Left lung (tissue), 14 donors: ENCODE measurements at regions of chr19 and their contacts with region 1.

Region 1: DNA sequence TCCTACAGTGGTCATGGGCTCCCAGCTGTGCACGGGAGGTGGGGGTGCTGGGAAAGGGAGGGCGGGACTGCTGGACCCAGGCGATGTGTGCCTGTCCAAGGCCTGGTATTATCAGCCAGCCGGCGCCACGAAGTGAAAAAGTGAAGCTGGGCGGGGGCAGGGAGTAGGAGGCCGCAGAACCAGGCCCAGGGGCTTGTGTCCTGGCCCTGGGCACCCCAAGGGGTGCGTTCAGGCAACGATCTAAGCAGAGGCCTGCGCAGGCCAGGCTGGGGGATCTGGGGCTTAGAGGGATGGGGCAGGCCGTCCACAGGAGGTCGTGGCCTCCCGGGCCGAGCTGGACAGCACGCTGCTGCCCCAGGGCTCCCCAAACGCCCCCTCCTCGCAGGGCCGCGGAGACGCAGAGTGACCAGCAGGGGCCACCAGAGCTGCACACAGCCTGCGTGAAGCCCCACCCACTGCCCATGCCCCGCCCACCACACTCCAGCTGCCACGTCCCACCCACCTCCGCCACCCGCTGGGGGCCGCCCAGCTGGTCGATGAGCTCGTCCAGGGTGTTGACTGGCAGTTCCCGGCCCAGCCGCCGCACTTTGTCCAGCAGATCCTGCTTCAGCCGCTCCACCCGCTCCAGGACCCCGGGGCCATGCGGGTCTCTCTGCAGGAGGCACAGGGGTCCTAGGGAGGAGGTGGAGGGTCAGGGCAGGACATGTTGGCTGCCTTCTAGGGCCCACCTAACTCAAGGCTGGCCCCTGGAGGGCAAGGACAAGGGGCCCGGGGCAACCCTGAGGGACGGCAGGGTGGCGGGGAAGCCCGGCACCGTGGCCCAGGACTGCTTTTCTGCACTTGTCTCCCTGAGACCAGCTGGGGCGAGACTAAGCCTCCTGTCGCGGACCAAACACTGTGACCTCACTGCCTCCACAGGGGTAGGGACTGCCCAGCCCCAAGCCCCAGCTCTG is 9.5 kb downstream of the GPX4 start:
- DNase-seq: peak; percentile 86 to 97 (median 95)
- ATAC-seq: peak; percentile 92
- H3K4me3 ChIP-seq: no peak overlapping the region
- H3K27ac ChIP-seq: peak overlapping the region; percentile 66 to 83
- H3K4me1 ChIP-seq: peaks cover 7 to 36% of the 10 kb centered on the region in 2 donors
- H3K27me3 ChIP-seq: no peaks in the 10 kb centered on the region
- CTCF ChIP-seq: peak; percentile 90 to 93

Region 2: GRCh38 chr19:1026189-1027019 is 86.9 kb before region 1 on chr19 and contains the start of gene CNN2:
- intact Hi-C with region 1: no loop called
- DNase-seq: peak; percentile 81 to 95 (median 86)
- ATAC-seq: peak; percentile 74
- H3K4me3 ChIP-seq: peak within 1 kb of the TSS; percentile 97 to 98
- H3K27ac ChIP-seq: peak within 1 kb of the TSS; percentile 94
- H3K4me1 ChIP-seq: peaks cover 8 to 71% of the 10 kb centered on the region in 2 donors
- H3K27me3 ChIP-seq: no peaks in the 10 kb centered on the region
- CTCF ChIP-seq: no peak
- polyA plus RNA-seq, gene CNN2: 133 to 214 (median 160) TPM

Region 3: DNA sequence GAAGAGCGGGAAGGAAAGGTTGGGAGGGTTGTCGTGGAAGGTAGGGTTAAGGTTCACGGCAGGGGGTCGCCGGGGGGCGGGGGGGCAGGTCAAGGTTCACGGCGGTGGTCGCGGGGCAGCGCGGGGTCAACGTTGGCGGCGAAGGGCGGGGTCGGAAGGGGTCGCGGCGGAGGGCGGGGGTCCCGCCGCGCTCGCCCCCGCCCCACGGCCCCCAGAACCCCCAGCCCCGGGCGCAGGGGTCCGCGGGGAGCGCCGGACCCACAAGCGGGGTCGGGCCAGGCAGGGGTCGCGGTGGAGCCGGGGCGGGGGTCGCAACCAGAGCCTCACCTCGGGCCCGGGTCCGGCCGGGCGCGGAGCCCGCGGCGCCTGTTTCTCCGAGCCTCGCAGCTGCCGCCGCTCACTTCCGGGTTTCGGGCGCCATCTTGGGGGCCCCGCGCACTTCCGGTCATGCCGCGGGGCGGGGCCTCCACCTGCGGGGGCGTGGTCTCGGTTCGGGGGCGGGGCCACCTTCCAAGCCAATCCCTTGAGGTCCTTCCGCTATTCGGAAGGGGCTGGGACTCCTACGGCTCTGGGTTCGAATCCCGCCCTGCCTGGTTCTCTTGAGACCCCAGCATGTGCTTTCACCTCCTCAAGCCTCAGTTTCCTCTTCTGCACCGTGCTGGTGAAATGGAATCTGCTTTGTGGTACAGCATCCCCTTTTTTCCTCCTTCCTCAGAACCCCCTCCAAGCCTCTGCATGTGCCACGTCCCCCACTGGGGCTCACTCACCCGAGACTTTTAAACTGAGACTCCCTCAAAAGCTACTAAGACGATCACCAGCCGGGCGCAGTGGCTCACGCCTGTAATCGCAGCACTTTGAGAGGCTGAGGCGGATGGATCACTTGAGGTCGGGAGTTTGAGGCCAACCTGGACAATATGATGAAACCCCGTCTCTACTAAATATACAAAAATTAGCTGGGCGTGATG is 60.8 kb after region 1 on chr19 and contains the start of gene SBNO2:
- intact Hi-C with region 1: no loop called
- DNase-seq: peak in 3 of 4 donors; percentile 87 to 95 (median 91)
- ATAC-seq: peak; percentile 76
- H3K4me3 ChIP-seq: peak within 1 kb of the TSS; percentile 73 to 85
- H3K27ac ChIP-seq: peak within 1 kb of the TSS; percentile 93 to 95
- H3K4me1 ChIP-seq: peaks cover 23 to 87% of the 10 kb centered on the region in 2 donors
- H3K27me3 ChIP-seq: no peaks in the 10 kb centered on the region
- CTCF ChIP-seq: peak in 1 of 2 donors; percentile 14
- polyA plus RNA-seq, gene SBNO2: 17.9 to 25.5 (median 22.5) TPM

Region 4: GRCh38 chr19:1189419-1189818 is 76.1 kb after region 1 on chr19:
- intact Hi-C with region 1: loop called in 1 of 2 experiments (anchors 5 kb)
- DNase-seq: no peak
- ATAC-seq: peak; percentile 88
- H3K4me3 ChIP-seq: no peak overlapping the region
- H3K27ac ChIP-seq: peak overlapping the region in 1 of 2 donors; percentile 23
- H3K4me1 ChIP-seq: peaks cover 0 to 11% of the 10 kb centered on the region in 2 donors
- H3K27me3 ChIP-seq: no peaks in the 10 kb centered on the region
- CTCF ChIP-seq: no peak